Panc1 (cell line): ENCODE measurements at regions of chr9 and their contacts with region 1.

Region 1: GRCh38 chr9:114082017-114082762 is 4.1 kb upstream of the AMBP start:
- DNase-seq: peak; percentile 50
- ATAC-seq: peak; percentile 98
- H3K4me3 ChIP-seq: no peak overlapping the region
- H3K27ac ChIP-seq: no peak overlapping the region
- H3K4me1 ChIP-seq: no peaks in the 10 kb centered on the region
- H3K27me3 ChIP-seq: no peaks in the 10 kb centered on the region
- CTCF ChIP-seq: peak; percentile 84

Region 2: GRCh38 chr9:113929634-113930389 is 152.4 kb before region 1 on chr9:
- CTCF ChIA-PET with region 1: no interaction called
- POLR2A ChIA-PET with region 1: no interaction called
- in situ Hi-C with region 1: no loop called
- intact Hi-C with region 1: no loop called
- DNase-seq: no peak
- ATAC-seq: no peak
- H3K4me3 ChIP-seq: no peak overlapping the region
- H3K27ac ChIP-seq: no peak overlapping the region
- H3K4me1 ChIP-seq: no peaks in the 10 kb centered on the region
- H3K27me3 ChIP-seq: no peaks in the 10 kb centered on the region
- CTCF ChIP-seq: no peak

Region 3: GRCh38 chr9:114163517-114163951 is 81.3 kb after region 1 on chr9:
- CTCF ChIA-PET with region 1: no interaction called
- POLR2A ChIA-PET with region 1: no interaction called
- in situ Hi-C with region 1: no loop called
- intact Hi-C with region 1: no loop called
- DNase-seq: no peak
- ATAC-seq: no peak
- H3K4me3 ChIP-seq: no peak overlapping the region
- H3K27ac ChIP-seq: no peak overlapping the region
- H3K4me1 ChIP-seq: peaks cover 4% of the 10 kb centered on the region
- H3K27me3 ChIP-seq: no peaks in the 10 kb centered on the region
- CTCF ChIP-seq: no peak

Region 4: DNA sequence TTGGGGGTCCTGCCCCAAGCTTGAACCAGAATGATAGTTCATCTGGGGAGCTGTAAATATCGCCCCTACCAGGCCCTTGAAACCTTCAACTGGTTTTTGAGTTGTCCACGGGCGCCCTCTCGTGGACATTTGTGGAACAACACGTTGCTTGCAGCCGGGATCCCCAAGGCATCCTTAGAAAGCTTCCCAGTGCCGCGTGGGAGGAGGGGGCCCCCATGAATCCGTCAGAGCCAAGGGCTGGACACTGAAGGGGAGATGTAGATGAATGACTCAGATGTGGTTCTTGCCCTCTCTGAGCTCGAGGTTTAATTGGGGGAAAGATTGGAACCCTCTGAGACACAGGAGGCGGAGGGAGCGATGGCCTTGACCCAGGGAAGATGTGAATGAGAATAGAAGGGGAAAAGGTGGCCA is 208.9 kb after region 1 on chr9:
- CTCF ChIA-PET with region 1: interaction called, 13 read pairs
- POLR2A ChIA-PET with region 1: no interaction called
- in situ Hi-C with region 1: no loop called
- intact Hi-C with region 1: no loop called
- DNase-seq: no peak
- ATAC-seq: peak; percentile 62
- H3K4me3 ChIP-seq: no peak overlapping the region
- H3K27ac ChIP-seq: no peak overlapping the region
- H3K4me1 ChIP-seq: peaks cover 15% of the 10 kb centered on the region
- H3K27me3 ChIP-seq: no peaks in the 10 kb centered on the region
- CTCF ChIP-seq: peak; percentile 85

Region 5: GRCh38 chr9:114304416-114305188 is 222.4 kb after region 1 on chr9:
- CTCF ChIA-PET with region 1: no interaction called
- POLR2A ChIA-PET with region 1: no interaction called
- in situ Hi-C with region 1: no loop called
- intact Hi-C with region 1: loop called (anchors 5 kb)
- DNase-seq: no peak
- ATAC-seq: no peak
- H3K4me3 ChIP-seq: no peak overlapping the region
- H3K27ac ChIP-seq: no peak overlapping the region
- H3K4me1 ChIP-seq: no peaks in the 10 kb centered on the region
- H3K27me3 ChIP-seq: no peaks in the 10 kb centered on the region
- CTCF ChIP-seq: no peak